Activated T-helper 1 cell treated with anti-CD3 and anti-CD28 coated beads, Interleukin-12 subunit alpha, Interleukin-12 subunit beta, Interleukin-2, Interleukin-4 antibody, amounts not matched to agents 30 ng/mL and 10 ng/mL and 1 ng/mL, durations not matched to agents 14 hours and 24 hours and 36 hours (primary cell): ENCODE measurements at regions of chr7 and their contacts with region 1.

Region 1: GRCh38 chr7:152675759-152676636 is at the start of gene XRCC2:
- DNase-seq: peak; percentile 94
- H3K4me3 Mint-ChIP-seq: peak within 1 kb of the TSS; percentile 92
- H3K27ac Mint-ChIP-seq: peak within 1 kb of the TSS; percentile 95
- H3K4me1 Mint-ChIP-seq: peaks cover 25% of the 10 kb centered on the region
- H3K27me3 Mint-ChIP-seq: no peaks in the 10 kb centered on the region
- total RNA-seq, gene XRCC2: 24.0 and 24.5 TPM in 2 replicates

Region 2: DNA sequence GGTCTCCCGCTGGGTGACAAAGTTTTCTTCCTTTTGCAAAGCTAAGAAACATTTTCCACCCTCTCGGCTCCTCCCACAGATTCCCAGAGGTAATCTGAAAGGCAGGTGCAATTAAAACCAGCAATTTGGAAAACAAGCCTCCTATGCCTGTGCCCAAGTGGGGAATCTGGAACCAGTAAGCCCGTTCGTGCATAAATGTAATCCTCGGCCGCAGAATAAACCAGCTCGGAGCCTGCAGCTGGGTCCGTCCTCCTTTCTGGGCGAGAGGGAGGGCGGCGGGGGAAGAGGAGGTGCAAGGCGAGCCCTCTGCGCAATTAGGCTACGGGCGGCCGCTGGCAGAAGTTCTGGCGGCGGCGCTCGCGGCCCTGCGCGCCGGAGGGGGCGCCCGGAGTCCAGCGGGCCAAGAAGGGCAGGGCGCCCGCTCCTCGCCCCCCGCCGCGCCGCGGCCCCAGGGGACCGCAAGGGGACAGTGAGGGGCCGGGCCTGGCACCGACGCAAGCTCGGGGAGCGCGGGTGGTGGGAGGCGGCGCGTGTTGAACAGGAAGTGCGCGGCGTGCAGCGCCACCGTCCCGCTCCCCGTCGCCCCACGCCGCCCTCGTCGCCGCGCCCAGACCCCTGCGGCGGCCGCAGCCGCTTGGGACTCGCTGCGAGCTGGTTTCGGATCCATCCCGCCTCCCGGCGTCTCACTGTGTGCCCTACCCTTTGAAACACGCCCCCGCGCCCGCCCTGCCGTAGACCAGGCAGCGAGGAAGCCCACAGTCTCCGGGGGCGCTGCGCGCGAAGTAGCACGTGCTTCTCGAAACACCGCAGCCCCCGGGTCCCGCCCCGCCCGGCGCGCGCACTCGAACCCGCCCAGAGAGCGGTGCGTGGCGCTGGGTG is 798.9 kb before region 1 on chr7 and contains the start of gene PRKAG2:
- intact Hi-C with region 1: loop called (anchors 2 kb)
- DNase-seq: peak; percentile 27
- H3K4me3 Mint-ChIP-seq: peak within 1 kb of the TSS; percentile 94
- H3K27ac Mint-ChIP-seq: peak within 1 kb of the TSS; percentile 71
- H3K4me1 Mint-ChIP-seq: peaks cover 6% of the 10 kb centered on the region
- H3K27me3 Mint-ChIP-seq: peaks cover 37% of the 10 kb centered on the region
- total RNA-seq, gene PRKAG2: 16.9 and 18.5 TPM in 2 replicates

Region 3: GRCh38 chr7:152145853-152146466 is 530.0 kb before region 1 on chr7:
- intact Hi-C with region 1: loop called (anchors 10 kb)
- DNase-seq: no peak
- H3K4me3 Mint-ChIP-seq: no peak overlapping the region
- H3K27ac Mint-ChIP-seq: peak overlapping the region; percentile 80
- H3K4me1 Mint-ChIP-seq: peaks cover 40% of the 10 kb centered on the region
- H3K27me3 Mint-ChIP-seq: no peaks in the 10 kb centered on the region

Region 4: GRCh38 chr7:152336754-152337368 is 339.1 kb before region 1 on chr7:
- intact Hi-C with region 1: loop called (anchors 1 kb)
- DNase-seq: peak; percentile 2
- H3K4me3 Mint-ChIP-seq: peak overlapping the region; percentile 53
- H3K27ac Mint-ChIP-seq: no peak overlapping the region
- H3K4me1 Mint-ChIP-seq: peaks cover 23% of the 10 kb centered on the region
- H3K27me3 Mint-ChIP-seq: no peaks in the 10 kb centered on the region

Region 5: DNA sequence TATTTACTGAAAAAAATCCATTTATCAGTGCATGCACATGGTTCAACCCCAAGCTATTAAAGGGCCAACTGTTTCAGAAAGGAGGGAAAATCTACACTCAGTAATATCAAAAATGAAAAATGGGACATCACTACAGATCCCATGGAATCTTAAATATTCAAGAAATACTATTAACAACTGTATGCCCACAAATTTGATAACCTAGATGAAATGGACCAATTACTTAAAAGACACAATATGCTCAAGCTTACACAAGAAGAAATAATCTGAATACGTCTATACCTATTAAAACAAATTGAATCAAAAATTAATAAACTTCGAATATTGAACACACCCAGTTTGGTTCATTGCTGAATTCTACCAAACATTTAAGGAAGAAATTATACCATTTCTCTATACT is 328.1 kb before region 1 on chr7:
- intact Hi-C with region 1: no loop called
- DNase-seq: no peak
- H3K4me3 Mint-ChIP-seq: no peak overlapping the region
- H3K27ac Mint-ChIP-seq: no peak overlapping the region
- H3K4me1 Mint-ChIP-seq: peaks cover 15% of the 10 kb centered on the region
- H3K27me3 Mint-ChIP-seq: no peaks in the 10 kb centered on the region

Region 6: DNA sequence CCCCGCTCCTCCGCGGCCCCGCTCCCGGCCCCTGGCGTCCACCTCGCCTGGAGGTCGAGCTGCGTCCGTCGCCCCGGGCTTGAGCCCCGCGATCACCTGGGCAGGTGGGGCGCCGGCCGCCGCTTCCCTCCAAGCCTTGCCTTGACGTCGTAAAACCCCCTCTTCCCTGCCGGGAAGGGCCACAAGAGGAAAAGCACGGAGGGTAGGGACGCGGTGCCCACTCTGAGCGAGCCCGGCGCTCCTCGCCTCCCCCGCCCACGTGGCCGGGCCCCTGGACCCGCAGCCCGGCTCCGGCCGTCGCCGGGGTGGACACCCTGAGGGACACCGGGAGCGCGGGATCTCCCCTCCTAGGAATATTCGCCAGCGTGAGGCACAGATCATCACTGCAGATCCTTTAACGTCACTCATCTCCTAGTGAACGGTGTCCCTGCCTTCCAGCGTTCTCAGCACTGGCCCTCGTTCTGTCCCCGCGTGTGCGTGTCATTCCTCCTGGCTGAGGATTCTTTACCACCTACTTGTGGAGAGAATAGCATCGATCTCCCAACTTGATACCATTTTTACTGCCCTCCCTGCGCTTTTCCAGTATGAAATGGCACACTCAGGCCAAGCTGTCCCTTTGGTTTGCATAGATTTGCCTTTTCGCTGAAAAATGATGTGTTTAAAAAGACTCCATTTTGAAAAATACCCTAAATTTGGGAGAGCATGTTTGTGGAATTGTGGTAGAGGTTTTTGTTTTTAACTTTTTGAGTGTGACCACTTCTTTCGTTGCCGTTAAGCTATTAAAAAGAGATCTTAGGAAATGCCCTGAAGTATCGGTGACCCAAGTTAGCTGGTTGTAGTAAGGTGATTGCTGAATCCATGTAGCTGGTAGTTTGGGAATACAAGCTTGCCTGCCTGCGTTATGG is 84.2 kb after region 1 on chr7:
- intact Hi-C with region 1: loop called (anchors 1 kb)
- DNase-seq: no peak
- H3K4me3 Mint-ChIP-seq: peak overlapping the region; percentile 86
- H3K27ac Mint-ChIP-seq: peak overlapping the region; percentile 80
- H3K4me1 Mint-ChIP-seq: peaks cover 21% of the 10 kb centered on the region
- H3K27me3 Mint-ChIP-seq: peaks cover 2% of the 10 kb centered on the region

Region 7: DNA sequence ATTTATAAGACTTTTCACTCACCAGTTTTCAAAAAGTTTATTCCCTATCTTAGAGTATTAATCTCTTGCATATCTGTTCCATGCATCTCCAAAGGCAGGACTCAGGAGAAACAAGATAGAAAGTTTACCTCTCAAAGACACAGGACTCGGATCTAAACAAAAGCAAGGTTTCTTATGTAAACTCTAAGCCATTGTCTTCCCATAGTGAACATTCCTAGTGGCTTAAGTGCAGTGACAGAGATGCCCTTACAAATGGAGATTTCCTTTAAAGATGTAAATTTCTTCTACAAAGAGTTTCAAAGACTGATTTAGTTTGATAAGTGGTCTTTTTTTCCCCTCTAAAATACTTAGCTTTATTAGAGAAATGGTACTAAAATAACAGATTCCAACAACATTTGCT is 293.3 kb after region 1 on chr7:
- intact Hi-C with region 1: no loop called
- DNase-seq: no peak
- H3K4me3 Mint-ChIP-seq: no peak overlapping the region
- H3K27ac Mint-ChIP-seq: no peak overlapping the region
- H3K4me1 Mint-ChIP-seq: no peaks in the 10 kb centered on the region
- H3K27me3 Mint-ChIP-seq: no peaks in the 10 kb centered on the region